ENCODE measurements at regions of chr7 and their contacts with region 1.

Region 1: GRCh38 chr7:139488810-139489209 is 5.3 kb upstream of the KLRG2 start:
- DNase-seq: no peak
- H3K4me3 ChIP-seq: no peak overlapping the region
- H3K27ac ChIP-seq: no peak overlapping the region
- H3K4me1 ChIP-seq: no peaks in the 10 kb centered on the region
- H3K27me3 ChIP-seq: no peaks in the 10 kb centered on the region
- CTCF ChIP-seq: no peak

Region 2: GRCh38 chr7:139396323-139396951 is 92.4 kb before region 1 on chr7:
- CTCF ChIA-PET with region 1: no interaction called
- dilution Hi-C with region 1: loop called (anchors 5 kb)
- in situ Hi-C with region 1: no loop called
- intact Hi-C with region 1: no loop called
- DNase-seq: peak; percentile 15
- H3K4me3 ChIP-seq: no peak overlapping the region
- H3K27ac ChIP-seq: peak overlapping the region; percentile 5
- H3K4me1 ChIP-seq: peaks cover 10% of the 10 kb centered on the region
- H3K27me3 ChIP-seq: no peaks in the 10 kb centered on the region
- CTCF ChIP-seq: no peak

Region 3: GRCh38 chr7:139431010-139431409 is 57.8 kb before region 1 on chr7:
- CTCF ChIA-PET with region 1: no interaction called
- dilution Hi-C with region 1: no loop called
- in situ Hi-C with region 1: no loop called
- intact Hi-C with region 1: loop called (anchors 2 kb)
- DNase-seq: peak; percentile 89
- H3K4me3 ChIP-seq: no peak overlapping the region
- H3K27ac ChIP-seq: no peak overlapping the region
- H3K4me1 ChIP-seq: peaks cover 14% of the 10 kb centered on the region
- H3K27me3 ChIP-seq: no peaks in the 10 kb centered on the region
- CTCF ChIP-seq: no peak

Region 4: DNA sequence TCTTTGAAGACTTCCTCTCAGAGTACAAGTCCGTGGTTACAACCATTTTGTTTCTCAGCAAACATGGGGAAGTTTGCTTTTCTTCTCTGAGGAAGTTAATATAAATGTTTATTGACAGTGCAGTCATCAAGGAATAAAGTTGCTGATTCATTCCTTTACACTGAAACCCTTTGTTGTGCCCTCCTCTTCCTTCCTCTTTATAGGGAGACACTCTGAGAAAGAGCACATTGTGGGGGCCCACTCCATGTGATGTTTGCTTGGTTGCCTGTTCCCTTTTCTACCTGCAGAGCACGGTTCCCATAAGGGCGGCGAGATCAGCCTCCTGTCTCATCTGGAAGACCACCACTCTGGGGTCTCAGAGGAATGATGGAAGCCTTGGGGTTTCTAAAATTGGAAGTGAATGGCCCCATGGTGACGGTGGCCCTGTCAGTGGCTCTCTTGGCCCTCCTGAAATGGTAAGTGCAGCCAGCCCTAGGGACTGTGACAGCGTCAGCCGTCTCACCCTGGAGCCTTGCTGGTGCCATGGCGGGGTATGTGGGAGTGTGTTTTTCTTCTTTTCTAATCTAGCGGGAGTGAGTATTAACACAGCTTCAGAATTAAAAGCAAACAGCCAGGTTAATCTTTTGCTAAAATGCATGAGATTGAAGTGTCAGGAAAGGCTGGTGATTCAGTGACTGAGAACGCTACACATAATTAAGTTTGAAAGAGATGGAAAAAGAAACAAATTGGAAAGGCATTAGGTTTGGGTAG is 340.4 kb after region 1 on chr7 and contains the start of gene TBXAS1:
- CTCF ChIA-PET with region 1: no interaction called
- dilution Hi-C with region 1: no loop called
- in situ Hi-C with region 1: no loop called
- intact Hi-C with region 1: no loop called
- DNase-seq: no peak
- H3K4me3 ChIP-seq: no peak within 1 kb of the TSS
- H3K27ac ChIP-seq: no peak within 1 kb of the TSS
- H3K4me1 ChIP-seq: peaks cover 8% of the 10 kb centered on the region
- H3K27me3 ChIP-seq: no peaks in the 10 kb centered on the region
- CTCF ChIP-seq: no peak
- total RNA-seq, gene TBXAS1: 5.2 TPM in 1 of 2 donors, not detected in the other

Measured in mammary epithelial cell (primary cell).